HepG2 (cell line): ENCODE measurements at regions of chr13 and their contacts with region 1.

Region 1: GRCh38 chr13:108728370-108728769 is 99.0 kb downstream of the MYO16 start:
- DNase-seq: peak; percentile 33
- ATAC-seq: peak; percentile 92
- H3K4me3 ChIP-seq: no peak overlapping the region
- H3K27ac ChIP-seq: no peak overlapping the region
- H3K4me1 ChIP-seq: no peaks in the 10 kb centered on the region
- H3K27me3 ChIP-seq: no peaks in the 10 kb centered on the region; a peak in 1 of 5 replicates
- CTCF ChIP-seq: peak; percentile 30; the same call in 1 of the 2 replicates
- EP300 ChIP-seq: no peak
- POLR2A ChIP-seq: no peak
- RAD21 ChIP-seq: no peak

Region 2: GRCh38 chr13:108342369-108343289 is 385.7 kb before region 1 on chr13:
- CTCF ChIA-PET with region 1: no interaction called
- POLR2A ChIA-PET with region 1: no interaction called
- in situ Hi-C with region 1: no loop called
- intact Hi-C with region 1: loop called (anchors 1 kb)
- DNase-seq: peak; percentile 15
- ATAC-seq: peak; percentile 38; the same call in 1 of the 3 replicates
- H3K4me3 ChIP-seq: no peak overlapping the region
- H3K27ac ChIP-seq: no peak overlapping the region
- H3K4me1 ChIP-seq: no peaks in the 10 kb centered on the region
- H3K27me3 ChIP-seq: no peaks in the 10 kb centered on the region
- CTCF ChIP-seq: peak; percentile 35; the same call in 1 of the 2 replicates
- EP300 ChIP-seq: no peak
- POLR2A ChIP-seq: no peak
- RAD21 ChIP-seq: no peak

Region 3: GRCh38 chr13:108594153-108594552 is 134.2 kb before region 1 on chr13:
- CTCF ChIA-PET with region 1: no interaction called
- POLR2A ChIA-PET with region 1: no interaction called
- in situ Hi-C with region 1: no loop called
- intact Hi-C with region 1: no loop called
- DNase-seq: no peak
- ATAC-seq: no peak
- H3K4me3 ChIP-seq: no peak overlapping the region
- H3K27ac ChIP-seq: no peak overlapping the region
- H3K4me1 ChIP-seq: no peaks in the 10 kb centered on the region
- H3K27me3 ChIP-seq: no peaks in the 10 kb centered on the region
- CTCF ChIP-seq: no peak
- EP300 ChIP-seq: no peak
- POLR2A ChIP-seq: no peak
- RAD21 ChIP-seq: no peak

Region 4: DNA sequence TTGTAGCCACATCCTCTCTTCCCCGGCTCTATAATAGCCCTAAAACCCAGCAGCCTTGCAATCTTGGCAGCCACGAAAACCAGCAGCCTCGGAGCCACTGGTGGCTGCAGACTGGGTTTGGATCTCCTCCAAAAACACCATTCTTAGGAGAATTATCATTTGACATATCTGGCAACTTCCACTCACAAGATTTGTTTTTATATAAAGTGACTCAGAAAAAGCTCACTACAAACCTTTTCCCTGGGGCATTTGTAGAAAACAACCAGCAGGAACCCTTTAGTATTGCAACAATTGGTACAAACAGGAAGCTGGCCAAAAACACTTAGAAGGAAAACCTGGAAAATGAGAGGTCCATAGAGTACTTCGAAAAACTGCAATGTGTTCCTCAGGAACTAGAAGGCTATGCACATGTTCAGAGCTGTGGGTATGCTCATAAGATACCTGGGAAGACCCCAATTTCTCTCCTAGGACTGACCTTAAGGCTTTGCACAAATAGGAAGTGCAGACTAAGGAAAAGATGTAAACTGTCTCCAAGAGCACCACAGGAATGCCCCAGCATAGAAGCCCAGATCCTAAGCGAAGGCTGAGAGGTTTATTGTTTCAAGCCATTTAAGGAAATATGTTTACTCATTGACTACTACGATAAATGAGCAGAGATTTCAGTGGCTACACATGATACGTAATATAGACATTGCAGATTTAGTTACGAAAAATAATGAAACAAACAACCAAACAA is 27.8 kb before region 1 on chr13:
- CTCF ChIA-PET with region 1: no interaction called
- POLR2A ChIA-PET with region 1: no interaction called
- in situ Hi-C with region 1: no loop called
- intact Hi-C with region 1: no loop called
- DNase-seq: no peak
- ATAC-seq: no peak
- H3K4me3 ChIP-seq: no peak overlapping the region
- H3K27ac ChIP-seq: no peak overlapping the region
- H3K4me1 ChIP-seq: no peaks in the 10 kb centered on the region
- H3K27me3 ChIP-seq: no peaks in the 10 kb centered on the region
- CTCF ChIP-seq: no peak
- EP300 ChIP-seq: no peak
- POLR2A ChIP-seq: no peak
- RAD21 ChIP-seq: no peak

Region 5: DNA sequence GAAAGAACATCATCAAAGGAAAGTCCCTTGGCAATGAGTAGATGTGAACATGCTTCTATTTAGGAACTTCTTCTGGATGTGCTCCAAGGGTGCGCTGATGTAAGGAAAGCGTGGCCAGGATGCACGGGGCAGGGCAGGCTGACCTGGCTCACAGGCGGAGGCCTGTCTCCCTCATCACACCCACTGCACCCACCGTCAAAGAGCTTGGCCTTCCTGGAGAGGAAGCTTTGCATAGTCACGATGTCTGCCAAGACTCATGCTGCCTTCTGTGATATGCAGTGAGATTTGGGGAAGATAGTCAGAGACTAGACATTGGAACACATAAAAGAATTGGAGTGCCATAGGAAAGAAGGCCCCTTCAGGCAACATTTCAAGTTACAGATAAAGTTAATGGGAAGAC is 17.0 kb before region 1 on chr13:
- CTCF ChIA-PET with region 1: no interaction called
- POLR2A ChIA-PET with region 1: no interaction called
- in situ Hi-C with region 1: no loop called
- intact Hi-C with region 1: loop called (anchors 1 kb)
- DNase-seq: no peak
- ATAC-seq: no peak
- H3K4me3 ChIP-seq: no peak overlapping the region
- H3K27ac ChIP-seq: no peak overlapping the region
- H3K4me1 ChIP-seq: no peaks in the 10 kb centered on the region
- H3K27me3 ChIP-seq: 0 out of 5 replicates have a peak, but pooled peaks cover 0 to 1% of the 10 kb centered on the region in 2 experiments
- CTCF ChIP-seq: no peak
- EP300 ChIP-seq: no peak
- POLR2A ChIP-seq: no peak
- RAD21 ChIP-seq: no peak